GM10248 (cell line): ENCODE measurements at regions of chr2 and their contacts with region 1.

Region 1: DNA sequence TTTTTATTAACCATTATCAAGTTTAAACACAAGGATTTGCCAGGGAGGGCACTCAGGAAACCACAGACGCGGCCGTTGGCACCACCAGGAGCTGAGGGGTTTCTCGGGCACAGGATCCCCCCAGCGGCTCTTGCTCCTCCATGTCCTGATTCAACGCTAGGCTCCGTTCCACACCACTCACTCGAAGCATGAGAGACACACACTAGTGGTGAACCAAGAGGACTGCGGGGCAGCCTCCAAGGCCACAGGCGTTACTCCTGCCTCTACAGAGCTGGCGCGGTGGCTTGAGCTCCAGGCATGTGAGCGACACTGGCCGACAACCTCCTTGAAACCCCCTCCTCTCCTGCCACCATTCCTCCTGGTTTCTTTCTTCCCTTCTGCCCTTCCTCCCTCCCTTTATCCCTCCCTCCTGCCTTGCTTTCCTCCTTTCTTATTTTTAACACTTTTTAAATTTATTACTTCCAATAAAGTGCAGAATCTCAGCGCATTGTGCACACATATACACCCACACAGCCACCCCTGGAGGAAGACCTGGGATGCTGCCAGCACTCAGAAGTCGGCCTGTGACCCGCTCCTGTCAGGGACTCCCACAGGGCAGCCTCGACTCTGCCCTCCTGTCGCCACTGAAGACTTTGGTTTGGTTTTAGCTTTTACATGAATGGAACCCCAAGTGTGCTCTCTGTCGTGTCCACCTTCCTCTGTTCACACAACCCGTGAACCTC is 21.7 kb downstream of the COX7A2L start:
- DNase-seq: no peak
- CTCF ChIP-seq: no peak

Region 2: GRCh38 chr2:42328148-42328833 is 11.1 kb before region 1 on chr2:
- CTCF ChIA-PET with region 1: interaction called, 10 read pairs
- POLR2A ChIA-PET with region 1: no interaction called
- DNase-seq: no peak
- CTCF ChIP-seq: peak; percentile 44